Sigmoid colon (tissue), 7 donors: ENCODE measurements at regions of chr1 and their contacts with region 1.

Region 1: DNA sequence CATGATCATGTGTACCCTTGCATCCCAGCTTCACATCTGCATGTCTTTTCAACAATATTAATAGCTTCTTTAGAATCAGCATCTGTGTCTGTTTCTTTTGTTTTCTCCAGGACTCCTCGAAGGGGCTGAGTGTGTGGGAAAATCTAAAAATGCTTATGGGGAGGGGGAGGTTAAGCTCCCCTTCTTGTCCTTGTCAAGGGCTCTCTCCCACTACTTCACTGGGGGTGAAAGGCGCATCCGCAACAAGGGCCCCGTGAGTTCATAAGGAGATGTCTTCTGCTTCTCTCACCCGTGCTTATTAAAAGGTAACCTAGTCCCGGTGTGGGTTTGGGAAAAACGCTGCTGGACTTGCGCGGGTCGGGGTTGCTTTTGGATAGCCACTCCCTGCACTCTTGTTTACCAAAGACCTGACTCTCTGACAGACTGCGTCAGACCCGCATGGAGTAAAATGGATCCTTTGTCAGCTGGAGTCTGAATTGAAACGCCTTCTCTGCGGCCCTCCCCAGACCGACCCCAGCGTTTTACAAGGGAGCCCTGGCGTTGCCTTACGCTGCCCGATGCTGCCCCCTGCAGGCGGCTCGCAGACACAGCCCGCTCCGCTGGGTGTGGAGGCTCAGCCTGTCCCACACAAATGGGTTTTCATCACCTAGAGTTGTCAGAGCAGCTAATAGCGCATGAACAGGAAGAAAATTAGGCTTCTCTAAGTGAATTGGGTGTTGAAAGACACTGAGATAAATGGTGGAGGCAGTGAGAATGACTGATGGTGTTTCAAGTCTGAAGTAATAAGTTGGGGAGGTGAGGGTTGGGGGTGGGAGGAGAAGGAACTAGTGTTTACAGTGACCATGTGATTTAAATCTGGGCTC is 53.8 kb downstream of the IER5 start:
- DNase-seq: peak; percentile 94
- H3K4me3 ChIP-seq: peak overlapping the region; percentile 5 to 42 (median 29)
- H3K27ac ChIP-seq: peak overlapping the region in 3 of 4 donors; percentile 34 to 56 (median 39)
- H3K4me1 ChIP-seq: peaks cover 0 to 16% (median 11%) of the 10 kb centered on the region in 4 donors
- H3K27me3 ChIP-seq: no peaks in the 10 kb centered on the region
- CTCF ChIP-seq: peak; percentile 94 to 98 (median 95)
- EP300 ChIP-seq: no peak
- POLR2A ChIP-seq: no peak

Region 2: GRCh38 chr1:180631766-180632325 is 510.5 kb before region 1 on chr1 and contains the start of gene XPR1:
- intact Hi-C with region 1: loop called (anchors 10 kb)
- DNase-seq: peak; percentile 99
- H3K4me3 ChIP-seq: peak within 1 kb of the TSS; percentile 79 to 98 (median 89)
- H3K27ac ChIP-seq: peak within 1 kb of the TSS; percentile 94 to 98 (median 96)
- H3K4me1 ChIP-seq: peaks cover 0 to 39% (median 24%) of the 10 kb centered on the region in 4 donors
- H3K27me3 ChIP-seq: no peaks in the 10 kb centered on the region
- CTCF ChIP-seq: peak in 3 of 4 experiments; percentile 16 to 39 (median 31)
- EP300 ChIP-seq: no peak
- POLR2A ChIP-seq: peak; percentile 88 to 89
- total RNA-seq, gene XPR1: 11.1 to 18.8 (median 14.9) TPM

Region 3: GRCh38 chr1:180778782-180779398 is 363.4 kb before region 1 on chr1:
- intact Hi-C with region 1: no loop called
- DNase-seq: no peak
- H3K4me3 ChIP-seq: no peak overlapping the region
- H3K27ac ChIP-seq: no peak overlapping the region
- H3K4me1 ChIP-seq: peaks cover 0 to 5% (median 0%) of the 10 kb centered on the region in 4 donors
- H3K27me3 ChIP-seq: no peaks in the 10 kb centered on the region
- CTCF ChIP-seq: no peak
- EP300 ChIP-seq: no peak
- POLR2A ChIP-seq: no peak

Region 4: GRCh38 chr1:180954005-180954800 is 188.1 kb before region 1 on chr1:
- intact Hi-C with region 1: loop called (anchors 5 kb)
- DNase-seq: peak; percentile 90
- H3K4me3 ChIP-seq: peak overlapping the region; percentile 48 to 65 (median 56)
- H3K27ac ChIP-seq: peak overlapping the region; percentile 54 to 81 (median 77)
- H3K4me1 ChIP-seq: peaks cover 0 to 21% (median 14%) of the 10 kb centered on the region in 4 donors
- H3K27me3 ChIP-seq: no peaks in the 10 kb centered on the region
- CTCF ChIP-seq: peak in 1 of 4 experiments; percentile 7
- EP300 ChIP-seq: no peak
- POLR2A ChIP-seq: no peak

Region 5: DNA sequence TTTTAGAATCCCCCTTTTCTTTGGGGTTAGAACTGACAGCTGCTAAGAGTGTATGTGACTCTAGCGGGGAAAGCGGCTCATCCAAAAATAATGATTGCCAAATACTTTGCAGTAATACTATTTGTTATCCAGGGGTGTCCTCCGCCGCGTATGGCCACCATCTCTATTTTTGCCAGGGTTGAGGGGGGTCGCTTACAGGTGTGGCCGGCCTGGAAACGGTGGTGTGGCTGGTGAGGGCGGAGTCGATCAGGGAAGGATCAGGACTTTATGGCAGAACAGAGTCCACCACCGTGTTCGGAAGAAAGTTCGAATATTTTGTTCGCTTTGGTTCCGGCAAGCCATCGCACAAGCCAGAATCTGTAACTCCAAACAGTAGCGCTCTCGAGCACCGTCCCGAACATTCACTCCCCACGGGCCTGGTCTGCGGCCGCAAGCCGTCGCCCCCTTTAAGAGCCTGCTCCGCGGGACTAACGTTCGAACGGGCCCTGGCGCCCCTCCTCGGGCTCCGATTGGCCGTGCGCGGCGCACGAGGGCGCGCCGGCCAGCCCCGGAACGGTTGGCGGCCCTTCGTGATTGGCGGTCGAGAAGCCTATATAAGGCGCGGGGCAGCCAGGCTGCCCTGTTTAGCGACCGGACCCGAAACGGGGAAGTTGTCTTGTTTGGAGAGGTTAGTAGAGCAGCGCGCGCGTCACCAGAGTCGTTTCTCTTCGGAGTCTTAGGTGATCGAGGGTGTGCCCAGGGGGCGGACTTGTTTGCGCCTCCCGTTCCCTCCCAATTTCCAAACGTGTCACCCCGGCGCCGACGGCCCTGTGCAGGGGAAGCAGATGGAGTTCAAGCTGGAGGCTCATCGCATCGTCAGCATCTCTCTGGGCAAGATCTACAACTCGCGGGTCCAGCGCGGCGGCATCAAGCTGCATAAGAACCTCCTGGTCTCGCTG is 54.0 kb before region 1 on chr1 and contains the start of gene IER5:
- intact Hi-C with region 1: loop called (anchors 2 kb)
- DNase-seq: peak; percentile 98
- H3K4me3 ChIP-seq: peak within 1 kb of the TSS; percentile 65 to 97 (median 84)
- H3K27ac ChIP-seq: peak within 1 kb of the TSS; percentile 90 to 99 (median 95)
- H3K4me1 ChIP-seq: peaks cover 0 to 38% (median 34%) of the 10 kb centered on the region in 4 donors
- H3K27me3 ChIP-seq: no peaks in the 10 kb centered on the region
- CTCF ChIP-seq: no peak
- EP300 ChIP-seq: no peak
- POLR2A ChIP-seq: peak; percentile 100
- total RNA-seq, gene IER5: 7.7 to 11.5 (median 8.5) TPM

Region 6: GRCh38 chr1:181166377-181167196 is 24.3 kb after region 1 on chr1:
- intact Hi-C with region 1: loop called (anchors 2 kb)
- DNase-seq: peak; percentile 79
- H3K4me3 ChIP-seq: no peak overlapping the region
- H3K27ac ChIP-seq: no peak overlapping the region
- H3K4me1 ChIP-seq: peaks cover 0 to 6% (median 4%) of the 10 kb centered on the region in 4 donors
- H3K27me3 ChIP-seq: no peaks in the 10 kb centered on the region
- CTCF ChIP-seq: peak; percentile 63 to 84 (median 74)
- EP300 ChIP-seq: no peak
- POLR2A ChIP-seq: no peak